ENCODE measurements at regions of chr10 and their contacts with region 1.

Region 1: GRCh38 chr10:100518761-100519241 is 860 bp downstream of the SEC31B start:
- DNase-seq: peak; percentile 71
- H3K4me3 Mint-ChIP-seq: no peak overlapping the region
- H3K27ac Mint-ChIP-seq: peak overlapping the region; percentile 37
- H3K4me1 Mint-ChIP-seq: peaks cover 39% of the 10 kb centered on the region
- H3K27me3 Mint-ChIP-seq: no peaks in the 10 kb centered on the region

Region 2: DNA sequence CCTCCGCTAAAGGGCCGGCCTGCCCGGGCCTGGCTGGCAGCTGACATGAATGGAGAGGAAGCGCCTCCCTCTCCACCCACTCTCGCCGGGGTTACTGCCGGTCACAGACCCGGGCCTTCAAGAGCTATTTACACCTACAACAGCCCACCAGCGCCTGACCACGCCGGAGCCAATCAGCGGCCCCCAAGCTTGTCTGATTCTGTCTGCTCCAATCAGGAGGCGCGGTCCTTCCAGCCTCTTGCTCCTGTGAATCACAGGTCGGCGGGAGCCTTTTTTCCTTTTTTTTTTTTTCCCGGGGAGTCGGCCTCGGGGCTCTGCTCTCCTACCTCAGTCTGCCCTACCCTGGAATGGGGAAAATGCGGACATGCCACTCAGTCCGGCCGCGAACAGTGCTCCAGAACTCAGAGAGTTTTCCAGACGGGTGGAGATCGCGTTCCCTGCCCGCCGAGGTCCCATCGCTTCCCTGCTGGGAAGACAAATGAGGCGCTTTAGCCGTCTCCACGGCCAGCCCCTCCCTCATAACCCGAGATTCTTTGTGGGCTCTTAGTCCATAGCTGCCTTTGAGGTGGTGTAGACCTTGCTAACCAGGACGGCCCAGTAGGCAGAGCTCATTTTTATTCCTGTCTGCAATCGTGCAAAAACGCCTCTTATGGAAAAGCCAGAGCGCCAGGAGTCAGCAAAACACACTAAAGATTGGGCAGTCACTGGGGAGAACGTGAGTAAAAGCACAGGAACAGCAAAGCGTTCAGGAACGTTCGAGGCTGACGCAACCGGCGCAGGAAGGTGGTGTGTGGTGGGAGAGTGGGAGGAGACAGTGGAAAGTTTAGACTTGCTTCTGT is 145.3 kb before region 1 on chr10:
- CTCF ChIA-PET with region 1: interaction called, 13 read pairs
- POLR2A ChIA-PET with region 1: interaction called, 3 read pairs
- DNase-seq: peak; percentile 96
- H3K4me3 Mint-ChIP-seq: no peak overlapping the region
- H3K27ac Mint-ChIP-seq: no peak overlapping the region
- H3K4me1 Mint-ChIP-seq: peaks cover 39% of the 10 kb centered on the region
- H3K27me3 Mint-ChIP-seq: no peaks in the 10 kb centered on the region

Region 3: DNA sequence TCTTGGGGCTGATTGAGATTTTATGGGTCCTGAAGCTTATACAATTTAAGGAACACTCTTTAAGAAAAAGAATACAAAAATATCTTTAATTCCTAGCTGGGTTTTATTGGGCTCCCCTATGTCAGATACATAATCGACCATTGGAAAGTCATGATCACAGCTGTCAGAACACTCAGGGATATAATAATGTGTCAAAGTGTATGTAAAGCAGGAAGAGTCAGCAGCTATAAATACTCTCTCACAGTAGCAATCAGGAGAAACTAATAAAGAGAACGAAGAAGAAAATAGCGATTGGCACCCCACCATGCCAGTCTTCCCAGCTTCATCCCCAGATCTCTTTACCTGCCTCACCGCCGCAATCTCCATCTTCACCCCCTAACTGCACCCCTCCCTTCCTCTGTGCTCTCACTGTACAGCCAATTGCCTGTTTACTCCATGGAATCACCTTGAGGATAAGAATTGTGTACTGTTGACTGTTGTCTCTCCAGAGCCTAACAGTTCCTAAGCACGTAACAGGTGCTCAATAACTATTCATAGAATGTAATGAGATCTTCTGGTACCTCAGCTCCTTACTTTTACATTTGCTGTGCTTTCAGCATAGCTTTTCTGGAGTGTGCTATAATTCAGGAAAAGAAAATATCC is 80.0 kb before region 1 on chr10:
- CTCF ChIA-PET with region 1: interaction called, 59 read pairs
- POLR2A ChIA-PET with region 1: interaction called, 3 read pairs
- DNase-seq: no peak
- H3K4me3 Mint-ChIP-seq: no peak overlapping the region
- H3K27ac Mint-ChIP-seq: no peak overlapping the region
- H3K4me1 Mint-ChIP-seq: peaks cover 4% of the 10 kb centered on the region
- H3K27me3 Mint-ChIP-seq: peaks cover 2% of the 10 kb centered on the region

Region 4: GRCh38 chr10:100481462-100482081 is 37.2 kb before region 1 on chr10:
- CTCF ChIA-PET with region 1: interaction called, 117 read pairs
- POLR2A ChIA-PET with region 1: interaction called, 35 read pairs
- DNase-seq: peak; percentile 96
- H3K4me3 Mint-ChIP-seq: peak overlapping the region; percentile 70
- H3K27ac Mint-ChIP-seq: no peak overlapping the region
- H3K4me1 Mint-ChIP-seq: peaks cover 22% of the 10 kb centered on the region
- H3K27me3 Mint-ChIP-seq: peaks cover 20% of the 10 kb centered on the region

Region 5: GRCh38 chr10:100529475-100530298 is 10.9 kb after region 1 on chr10 and contains the start of gene NDUFB8:
- CTCF ChIA-PET with region 1: interaction called, 94 read pairs
- POLR2A ChIA-PET with region 1: interaction called, 135 read pairs
- DNase-seq: peak; percentile 90
- H3K4me3 Mint-ChIP-seq: peak within 1 kb of the TSS; percentile 90
- H3K27ac Mint-ChIP-seq: peak within 1 kb of the TSS; percentile 95
- H3K4me1 Mint-ChIP-seq: peaks cover 41% of the 10 kb centered on the region
- H3K27me3 Mint-ChIP-seq: no peaks in the 10 kb centered on the region
- total RNA-seq, gene NDUFB8: 315 to 324 TPM

Region 6: DNA sequence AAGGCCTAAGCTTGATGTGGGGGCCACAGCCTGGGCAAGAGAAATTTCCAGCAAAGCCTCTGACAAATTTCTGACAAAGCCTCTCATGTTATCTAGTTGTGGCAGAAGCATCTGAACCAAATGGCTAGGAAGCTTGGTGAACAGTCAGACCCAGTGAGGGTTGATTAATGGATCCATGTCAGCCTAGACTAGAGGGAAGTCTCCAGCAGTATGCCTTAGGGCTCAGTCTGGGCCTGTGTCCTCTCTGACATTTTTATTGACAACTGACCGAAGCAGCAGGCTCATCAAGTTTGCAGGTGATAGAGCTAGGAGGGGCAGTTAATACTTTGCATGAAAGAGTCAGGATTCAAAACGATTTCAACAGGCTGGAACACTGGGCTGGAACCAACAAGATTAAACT is 42.2 kb after region 1 on chr10:
- CTCF ChIA-PET with region 1: no interaction called
- POLR2A ChIA-PET with region 1: no interaction called
- DNase-seq: no peak
- H3K4me3 Mint-ChIP-seq: no peak overlapping the region
- H3K27ac Mint-ChIP-seq: no peak overlapping the region
- H3K4me1 Mint-ChIP-seq: peaks cover 24% of the 10 kb centered on the region
- H3K27me3 Mint-ChIP-seq: peaks cover 28% of the 10 kb centered on the region

Measured in activated CD4-positive, alpha-beta memory T cell treated with anti-CD3 and anti-CD28 coated beads, Interleukin-2, amount 10 ng/mL, durations not matched to agents 7 days and 5 days (primary cell).